Panc1 (cell line): ENCODE measurements at regions of chr1 and their contacts with region 1.

Region 1: DNA sequence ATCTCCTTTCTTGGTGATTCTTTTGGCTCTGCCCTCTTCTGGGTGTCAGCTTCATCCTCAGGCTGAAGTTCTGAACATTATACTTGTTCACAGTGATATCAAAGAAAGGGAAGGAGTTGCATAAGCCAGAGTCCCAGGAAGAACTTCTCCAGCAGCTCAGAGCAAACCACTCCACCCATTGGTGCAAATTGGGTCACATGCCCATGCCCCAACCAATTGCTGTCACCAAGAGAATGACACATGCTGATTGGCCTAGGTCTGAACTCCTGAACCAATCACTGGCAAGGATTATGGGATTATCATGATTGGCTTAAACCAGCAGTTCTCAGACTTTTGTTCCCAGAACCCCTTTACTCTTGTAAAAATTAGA is 256.5 kb upstream of the TMEM51 start:
- DNase-seq: no peak
- ATAC-seq: no peak
- H3K4me3 ChIP-seq: no peak overlapping the region
- H3K27ac ChIP-seq: no peak overlapping the region
- H3K4me1 ChIP-seq: no peaks in the 10 kb centered on the region
- H3K27me3 ChIP-seq: no peaks in the 10 kb centered on the region
- CTCF ChIP-seq: no peak

Region 2: GRCh38 chr1:14945132-14946016 is 48.3 kb after region 1 on chr1:
- CTCF ChIA-PET with region 1: interaction called, 13 read pairs
- POLR2A ChIA-PET with region 1: no interaction called
- in situ Hi-C with region 1: no loop called
- intact Hi-C with region 1: no loop called
- DNase-seq: no peak
- ATAC-seq: no peak
- H3K4me3 ChIP-seq: no peak overlapping the region; a peak in 1 of 4 replicates
- H3K27ac ChIP-seq: no peak overlapping the region
- H3K4me1 ChIP-seq: no peaks in the 10 kb centered on the region
- H3K27me3 ChIP-seq: no peaks in the 10 kb centered on the region
- CTCF ChIP-seq: no peak

Region 3: DNA sequence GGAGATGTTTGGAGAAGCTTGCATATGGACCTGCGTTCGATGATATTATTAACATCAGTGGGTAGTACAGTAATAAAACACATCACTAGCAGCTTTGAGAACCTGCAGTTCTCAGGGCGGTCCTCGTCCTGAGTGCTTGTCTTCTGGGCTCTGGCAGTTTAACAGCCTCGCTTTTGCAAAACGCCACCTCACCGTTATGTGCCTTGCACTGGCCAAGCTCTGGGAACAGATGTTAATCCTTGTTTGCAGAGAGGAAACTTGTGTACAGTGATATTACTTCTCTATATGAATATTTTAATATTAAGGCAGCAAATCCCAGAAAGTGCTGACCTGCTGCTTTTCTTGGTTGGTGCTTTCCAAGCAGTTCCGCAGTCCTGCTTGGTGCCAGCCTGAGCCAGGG is 89.1 kb after region 1 on chr1:
- CTCF ChIA-PET with region 1: no interaction called
- POLR2A ChIA-PET with region 1: no interaction called
- in situ Hi-C with region 1: no loop called
- intact Hi-C with region 1: no loop called
- DNase-seq: no peak
- ATAC-seq: no peak
- H3K4me3 ChIP-seq: no peak overlapping the region
- H3K27ac ChIP-seq: no peak overlapping the region
- H3K4me1 ChIP-seq: no peaks in the 10 kb centered on the region
- H3K27me3 ChIP-seq: no peaks in the 10 kb centered on the region
- CTCF ChIP-seq: no peak

Region 4: DNA sequence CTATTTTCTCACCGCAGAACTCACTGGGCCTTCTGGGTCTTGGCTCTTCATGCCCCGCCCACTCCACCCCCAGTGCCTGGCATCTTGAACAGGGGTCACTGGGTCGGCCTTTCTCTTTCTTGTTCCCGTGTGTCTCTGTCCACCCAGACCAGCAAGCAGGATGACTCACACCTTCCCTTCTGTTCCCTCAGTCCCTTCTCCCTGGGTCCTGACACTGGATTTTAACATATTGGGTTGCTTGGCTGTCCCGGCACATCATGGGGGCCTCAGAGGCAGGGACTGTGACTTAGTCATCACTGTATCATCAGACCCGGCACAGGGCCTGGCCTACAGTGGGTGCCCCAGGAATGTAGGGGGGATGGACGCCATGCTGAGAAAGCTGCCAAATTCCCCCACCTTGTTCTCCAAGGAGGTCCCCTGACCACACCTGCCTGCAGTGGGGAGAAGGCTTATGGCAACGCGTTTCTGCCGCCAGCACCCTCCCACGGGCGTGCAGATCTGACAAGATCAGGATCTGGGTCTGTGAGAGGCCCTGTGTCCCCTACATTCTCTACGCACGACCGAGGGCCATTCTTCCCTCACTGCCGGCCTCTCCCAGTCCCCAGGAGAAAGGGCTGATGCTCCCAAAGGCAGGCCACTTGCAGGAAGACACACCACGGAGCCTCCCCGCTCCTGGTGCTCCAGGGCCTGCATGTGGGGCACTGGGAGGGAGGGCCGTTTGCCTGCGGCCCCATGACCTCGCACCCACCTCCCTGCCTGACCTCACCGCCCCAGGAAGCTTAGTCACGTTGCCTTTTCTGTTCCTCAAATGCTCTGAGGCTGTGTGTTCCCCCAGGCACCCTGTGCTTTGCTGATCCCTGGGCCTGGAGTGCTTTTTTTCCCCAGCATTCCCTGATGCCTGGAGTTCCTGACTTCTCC is 99.3 kb after region 1 on chr1:
- CTCF ChIA-PET with region 1: no interaction called
- POLR2A ChIA-PET with region 1: no interaction called
- in situ Hi-C with region 1: no loop called
- intact Hi-C with region 1: no loop called
- DNase-seq: no peak
- ATAC-seq: peak; percentile 50; the same call in 1 of the 2 replicates
- H3K4me3 ChIP-seq: no peak overlapping the region
- H3K27ac ChIP-seq: no peak overlapping the region
- H3K4me1 ChIP-seq: no peaks in the 10 kb centered on the region
- H3K27me3 ChIP-seq: no peaks in the 10 kb centered on the region
- CTCF ChIP-seq: no peak

Region 5: DNA sequence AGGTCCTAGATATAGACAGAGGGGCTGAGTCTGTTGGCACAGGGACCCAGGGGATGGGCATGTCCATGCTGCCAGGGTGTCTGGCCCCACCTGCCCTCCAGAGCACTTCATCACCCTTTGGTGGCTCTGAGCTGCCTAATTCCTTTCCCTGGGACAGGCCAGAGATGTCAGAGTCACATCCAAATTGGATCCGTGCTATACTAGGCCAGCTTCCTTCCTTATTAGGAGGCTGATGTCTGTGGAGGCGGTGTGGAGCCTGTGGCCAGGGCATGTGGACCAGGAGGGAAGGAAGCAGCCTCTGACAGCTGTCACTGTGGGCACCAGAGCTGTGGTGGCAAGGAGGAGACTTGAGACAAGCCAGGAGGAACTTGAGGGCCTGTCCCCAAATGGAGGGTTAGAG is 178.8 kb after region 1 on chr1:
- CTCF ChIA-PET with region 1: no interaction called
- POLR2A ChIA-PET with region 1: no interaction called
- in situ Hi-C with region 1: no loop called
- intact Hi-C with region 1: no loop called
- DNase-seq: no peak
- ATAC-seq: no peak
- H3K4me3 ChIP-seq: no peak overlapping the region
- H3K27ac ChIP-seq: no peak overlapping the region
- H3K4me1 ChIP-seq: no peaks in the 10 kb centered on the region
- H3K27me3 ChIP-seq: no peaks in the 10 kb centered on the region
- CTCF ChIP-seq: no peak